ENCODE measurements at regions of chr20 and their contacts with region 1.

Region 1: DNA sequence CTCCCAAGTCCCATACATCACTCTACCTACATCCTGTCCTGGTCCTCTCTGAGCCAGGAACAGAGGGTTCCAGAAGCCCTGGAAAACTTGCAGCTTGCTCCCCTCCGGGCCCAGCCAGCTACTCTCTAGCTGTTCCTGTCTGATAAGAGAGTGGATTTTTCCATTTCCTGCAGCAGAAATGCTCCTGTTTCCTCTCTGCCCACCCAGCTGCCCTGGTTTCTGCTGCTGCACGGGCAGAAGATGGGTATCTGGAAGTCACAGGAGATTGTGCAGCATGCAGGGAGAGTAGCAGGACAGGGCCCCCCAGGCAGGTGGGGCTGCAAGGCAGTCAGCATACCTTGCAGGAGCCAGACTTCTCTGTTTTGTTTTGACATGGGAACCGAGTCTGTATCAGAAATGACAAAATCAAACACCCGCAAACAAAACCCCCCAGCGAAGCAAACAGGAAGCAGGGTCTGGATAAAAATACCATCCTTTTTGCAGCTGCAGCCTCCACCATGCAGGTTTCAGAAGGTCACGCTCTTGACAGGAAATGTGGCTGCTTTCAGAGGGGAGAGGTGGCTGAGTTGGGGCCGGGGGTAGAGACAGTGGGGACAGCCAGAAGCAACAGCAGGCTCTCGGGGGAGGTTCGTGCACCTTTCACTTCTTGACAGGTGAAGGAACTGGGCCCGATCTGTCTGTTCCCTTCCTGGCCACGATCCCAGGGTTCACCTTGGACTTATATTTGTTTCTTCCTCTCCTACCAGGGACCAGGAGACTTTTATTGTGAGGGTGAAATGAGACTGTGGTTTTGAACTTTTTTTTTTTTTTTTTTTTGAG is 50.8 kb upstream of the FAM83D start:
- DNase-seq: peak in 8 of 9 donors; percentile 28 to 56 (median 52)
- ATAC-seq: peak; percentile 69
- H3K4me3 ChIP-seq: peak overlapping the region; percentile 46
- H3K4me3 Mint-ChIP-seq: peak overlapping the region; percentile 75 to 94 (median 86)
- H3K27ac ChIP-seq: peak overlapping the region; percentile 65
- H3K27ac Mint-ChIP-seq: peak overlapping the region; percentile 84 to 94 (median 92)
- H3K4me1 ChIP-seq: peaks cover 46 to 66% of the 10 kb centered on the region in 2 donors
- H3K4me1 Mint-ChIP-seq: peaks cover 64 to 91% (median 79%) of the 10 kb centered on the region in 7 donors
- H3K27me3 ChIP-seq: no peaks in the 10 kb centered on the region
- H3K27me3 Mint-ChIP-seq: no peaks in the 10 kb centered on the region

Region 2: DNA sequence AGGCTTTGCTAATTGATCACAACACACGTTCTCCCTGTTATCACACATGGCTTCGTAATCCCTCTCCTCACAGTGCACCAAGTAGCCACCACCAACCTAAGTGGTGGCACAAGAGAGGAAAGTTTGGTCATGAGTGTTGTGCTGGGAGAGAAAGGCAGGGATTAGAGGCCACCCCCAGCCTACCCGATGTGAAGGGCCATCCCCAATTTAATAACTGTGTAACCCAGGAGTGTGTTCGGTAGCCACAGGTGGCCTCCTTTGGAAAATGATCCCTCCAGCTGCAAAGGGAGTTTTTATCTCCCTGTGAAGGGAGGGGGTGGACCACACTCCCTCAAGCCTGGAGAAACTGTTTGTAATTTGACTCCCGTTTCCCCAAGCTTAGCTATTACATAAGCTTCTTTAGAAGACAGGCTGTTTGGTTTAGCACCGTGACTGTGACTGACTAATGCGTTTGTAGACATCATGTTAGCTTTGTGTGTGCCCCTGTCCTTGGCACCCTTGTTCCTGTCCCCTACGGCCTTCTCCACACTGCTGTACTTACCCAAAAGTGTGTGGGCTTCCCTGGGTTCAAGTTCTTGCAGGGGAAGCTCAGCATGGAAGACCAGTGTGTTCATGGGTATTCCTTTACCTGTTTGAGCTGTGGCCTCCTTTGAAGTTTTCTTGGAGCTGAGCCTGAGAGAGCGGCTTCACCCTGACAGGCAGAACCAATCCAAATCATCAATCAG is 49.3 kb before region 1 on chr20:
- CTCF ChIA-PET with region 1: interaction called, 3 read pairs
- POLR2A ChIA-PET with region 1: no interaction called
- intact Hi-C with region 1: loop called in 1 of 2 experiments (anchors 5 kb)
- DNase-seq: no peak
- ATAC-seq: no peak
- H3K4me3 ChIP-seq: no peak overlapping the region
- H3K4me3 Mint-ChIP-seq: no peak overlapping the region
- H3K27ac ChIP-seq: no peak overlapping the region
- H3K27ac Mint-ChIP-seq: peak overlapping the region in 7 of 9 donors; percentile 18 to 84 (median 65)
- H3K4me1 ChIP-seq: peaks cover 16 to 17% of the 10 kb centered on the region in 2 donors
- H3K4me1 Mint-ChIP-seq: peaks cover 24 to 83% (median 68%) of the 10 kb centered on the region in 7 donors
- H3K27me3 ChIP-seq: no peaks in the 10 kb centered on the region
- H3K27me3 Mint-ChIP-seq: no peaks in the 10 kb centered on the region

Region 3: DNA sequence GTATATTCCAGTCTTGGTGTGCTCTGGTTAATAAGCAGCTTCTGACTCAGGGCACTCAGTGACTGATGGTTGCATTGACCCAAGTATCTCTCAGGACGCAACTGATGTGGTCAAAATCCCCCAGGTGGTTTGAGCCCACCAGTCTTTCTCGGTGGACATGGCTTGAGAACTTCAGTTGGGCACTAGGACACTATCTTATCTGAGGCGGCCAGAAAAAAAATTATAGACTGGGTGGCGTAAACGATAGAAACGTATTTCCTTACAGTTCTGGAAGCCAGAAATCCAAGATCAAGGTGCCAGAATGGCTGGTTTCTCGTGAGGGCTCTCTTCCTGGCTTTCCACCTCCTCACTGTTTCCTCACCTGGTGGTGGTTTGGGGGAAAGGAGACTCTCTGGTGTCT is 17.7 kb before region 1 on chr20:
- CTCF ChIA-PET with region 1: interaction called, 3 read pairs
- POLR2A ChIA-PET with region 1: interaction called, 4 read pairs
- intact Hi-C with region 1: loop called (anchors 2 kb)
- DNase-seq: no peak
- ATAC-seq: no peak
- H3K4me3 ChIP-seq: no peak overlapping the region
- H3K4me3 Mint-ChIP-seq: no peak overlapping the region
- H3K27ac ChIP-seq: no peak overlapping the region
- H3K27ac Mint-ChIP-seq: peak overlapping the region in 3 of 9 donors; percentile 13 to 69 (median 63)
- H3K4me1 ChIP-seq: peaks cover 28 to 39% of the 10 kb centered on the region in 2 donors
- H3K4me1 Mint-ChIP-seq: peaks cover 46 to 83% (median 60%) of the 10 kb centered on the region in 7 donors
- H3K27me3 ChIP-seq: no peaks in the 10 kb centered on the region
- H3K27me3 Mint-ChIP-seq: no peaks in the 10 kb centered on the region

Region 4: GRCh38 chr20:38893565-38894090 is 18.2 kb after region 1 on chr20:
- CTCF ChIA-PET with region 1: interaction called, 10 read pairs
- POLR2A ChIA-PET with region 1: interaction called, 10 read pairs
- intact Hi-C with region 1: loop called (anchors 1 kb)
- DNase-seq: peak; percentile 59 to 85 (median 77)
- ATAC-seq: peak; percentile 92
- H3K4me3 ChIP-seq: peak overlapping the region; percentile 33
- H3K4me3 Mint-ChIP-seq: peak overlapping the region in 8 of 10 donors; percentile 5 to 64 (median 43)
- H3K27ac ChIP-seq: peak overlapping the region; percentile 42
- H3K27ac Mint-ChIP-seq: peak overlapping the region; percentile 14 to 94 (median 70)
- H3K4me1 ChIP-seq: peaks cover 7 to 10% of the 10 kb centered on the region in 2 donors
- H3K4me1 Mint-ChIP-seq: peaks cover 21 to 52% (median 29%) of the 10 kb centered on the region in 7 donors
- H3K27me3 ChIP-seq: no peaks in the 10 kb centered on the region
- H3K27me3 Mint-ChIP-seq: no peaks in the 10 kb centered on the region

Region 5: DNA sequence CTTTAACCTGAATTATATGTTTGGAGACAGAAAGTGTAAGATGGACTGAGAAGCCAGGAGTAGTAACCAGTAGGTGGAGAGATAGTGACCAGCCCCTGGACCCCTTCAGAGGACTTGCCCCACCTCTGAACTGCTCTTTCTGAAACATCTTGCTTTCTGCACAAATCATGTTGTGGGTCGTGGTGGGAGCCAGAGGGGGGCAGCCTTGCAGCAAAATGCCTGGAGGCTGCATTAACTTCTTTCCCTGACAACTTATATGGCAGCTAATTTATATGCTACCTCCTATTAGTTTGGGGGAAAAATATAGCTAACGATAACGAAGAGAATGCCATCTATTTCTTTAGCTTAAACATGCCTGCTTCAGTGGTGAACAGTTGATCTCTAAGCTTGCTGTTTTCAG is 953.9 kb after region 1 on chr20:
- CTCF ChIA-PET with region 1: no interaction called
- POLR2A ChIA-PET with region 1: no interaction called
- intact Hi-C with region 1: no loop called
- DNase-seq: no peak
- ATAC-seq: no peak
- H3K4me3 ChIP-seq: no peak overlapping the region
- H3K4me3 Mint-ChIP-seq: no peak overlapping the region
- H3K27ac ChIP-seq: no peak overlapping the region
- H3K27ac Mint-ChIP-seq: no peak overlapping the region
- H3K4me1 ChIP-seq: no peaks in the 10 kb centered on the region
- H3K4me1 Mint-ChIP-seq: no peaks in the 10 kb centered on the region
- H3K27me3 ChIP-seq: no peaks in the 10 kb centered on the region
- H3K27me3 Mint-ChIP-seq: peaks cover 0 to 12% (median 5%) of the 10 kb centered on the region in 5 donors

Region 6: DNA sequence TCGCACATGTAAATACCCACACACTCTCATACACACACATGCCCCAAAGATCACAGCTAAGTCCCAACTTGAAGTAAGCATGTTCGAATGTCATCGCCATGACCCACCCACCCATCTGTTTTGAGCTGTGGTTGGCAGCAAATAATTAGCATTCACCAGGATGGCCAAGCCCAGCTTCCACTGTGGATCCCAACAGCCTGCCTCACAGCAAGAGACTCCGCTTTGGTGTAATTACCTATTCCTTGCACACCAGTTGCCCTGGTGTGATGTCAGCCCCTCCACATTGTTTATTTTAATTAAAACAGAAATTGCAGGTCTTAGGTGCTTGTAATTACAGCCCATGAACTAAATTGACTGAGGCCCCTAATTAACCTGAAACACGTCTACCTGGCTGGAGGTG is 1732.5 kb after region 1 on chr20:
- CTCF ChIA-PET with region 1: no interaction called
- POLR2A ChIA-PET with region 1: no interaction called
- intact Hi-C with region 1: no loop called
- DNase-seq: no peak
- ATAC-seq: no peak
- H3K4me3 ChIP-seq: no peak overlapping the region
- H3K4me3 Mint-ChIP-seq: no peak overlapping the region
- H3K27ac ChIP-seq: no peak overlapping the region
- H3K27ac Mint-ChIP-seq: no peak overlapping the region
- H3K4me1 ChIP-seq: no peaks in the 10 kb centered on the region
- H3K4me1 Mint-ChIP-seq: peaks cover 0 to 2% (median 0%) of the 10 kb centered on the region in 7 donors
- H3K27me3 ChIP-seq: no peaks in the 10 kb centered on the region
- H3K27me3 Mint-ChIP-seq: peaks cover 2 to 31% (median 22%) of the 10 kb centered on the region in 5 donors

Measured in naive thymus-derived CD4-positive, alpha-beta T cell (primary cell).